Activated CD4-positive, alpha-beta T cell treated with anti-CD3 and anti-CD28 coated beads for 36 hours (primary cell): ENCODE measurements at regions of chr11 and their contacts with region 1.

Region 1: GRCh38 chr11:102341844-102342318 is 5.1 kb upstream of the BIRC2 start:
- DNase-seq: peak; percentile 84
- ATAC-seq: peak; percentile 43
- H3K4me3 Mint-ChIP-seq: no peak overlapping the region
- H3K27ac Mint-ChIP-seq: no peak overlapping the region
- H3K4me1 Mint-ChIP-seq: peaks cover 45% of the 10 kb centered on the region
- H3K27me3 Mint-ChIP-seq: no peaks in the 10 kb centered on the region

Region 2: GRCh38 chr11:100908746-100909145 is 1433.1 kb before region 1 on chr11:
- CTCF ChIA-PET with region 1: no interaction called
- POLR2A ChIA-PET with region 1: no interaction called
- intact Hi-C with region 1: no loop called
- DNase-seq: no peak
- ATAC-seq: no peak
- H3K4me3 Mint-ChIP-seq: no peak overlapping the region
- H3K27ac Mint-ChIP-seq: no peak overlapping the region
- H3K4me1 Mint-ChIP-seq: no peaks in the 10 kb centered on the region
- H3K27me3 Mint-ChIP-seq: no peaks in the 10 kb centered on the region

Region 3: DNA sequence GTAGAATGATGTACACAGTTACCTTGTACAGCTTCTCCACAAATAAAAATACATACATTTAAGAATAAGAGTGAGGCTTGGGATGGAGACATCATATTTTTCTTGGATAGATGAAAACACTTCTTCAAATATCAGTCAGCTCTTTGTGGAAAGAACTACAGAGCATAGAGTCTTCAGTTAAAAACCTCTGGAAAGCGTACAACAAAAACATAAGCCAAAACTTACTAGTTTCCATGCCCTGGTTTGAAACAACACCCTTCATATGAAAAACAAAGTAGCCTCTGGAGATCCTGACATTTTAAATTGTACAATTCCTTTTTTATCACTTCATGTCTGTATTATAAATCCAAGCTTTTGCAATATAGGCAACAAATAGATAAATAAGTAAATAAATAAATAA is 434.1 kb before region 1 on chr11:
- CTCF ChIA-PET with region 1: no interaction called
- POLR2A ChIA-PET with region 1: no interaction called
- intact Hi-C with region 1: no loop called
- DNase-seq: no peak
- ATAC-seq: no peak
- H3K4me3 Mint-ChIP-seq: no peak overlapping the region
- H3K27ac Mint-ChIP-seq: no peak overlapping the region
- H3K4me1 Mint-ChIP-seq: no peaks in the 10 kb centered on the region
- H3K27me3 Mint-ChIP-seq: peaks cover 16% of the 10 kb centered on the region

Region 4: DNA sequence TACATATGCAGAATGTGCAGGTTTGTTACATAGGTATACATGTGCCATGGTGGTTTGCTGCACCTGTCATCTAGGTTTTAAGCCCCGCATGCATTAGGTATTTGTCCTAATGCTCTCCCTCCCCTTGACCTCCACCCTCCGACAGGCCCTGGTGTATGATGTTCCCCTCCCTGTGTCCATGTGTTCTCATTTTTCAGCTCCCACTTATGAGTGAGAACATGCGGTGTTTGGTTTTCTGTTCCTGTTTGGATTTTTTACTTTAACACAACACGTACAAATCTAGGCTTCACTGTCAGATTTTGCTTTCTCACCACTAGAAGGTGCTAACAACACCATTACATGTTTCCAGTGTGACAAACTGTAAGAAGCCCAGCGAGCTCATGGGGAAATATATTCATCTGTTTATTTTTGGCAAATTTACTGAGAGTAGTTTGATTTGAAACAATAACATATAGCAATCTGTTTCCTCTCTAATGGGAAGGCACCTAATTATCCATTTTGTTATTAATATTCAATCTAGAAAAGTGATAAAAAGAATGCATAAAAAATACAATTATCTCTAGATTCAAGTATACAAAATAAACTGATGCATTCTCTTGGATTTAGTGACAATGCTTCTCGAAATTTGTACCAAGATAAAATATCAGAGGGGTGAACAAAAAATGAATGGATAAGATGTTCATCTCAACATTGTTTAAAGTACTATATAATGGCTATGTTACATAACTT is 47.8 kb before region 1 on chr11:
- CTCF ChIA-PET with region 1: interaction called, 67 read pairs
- POLR2A ChIA-PET with region 1: no interaction called
- intact Hi-C with region 1: no loop called
- DNase-seq: no peak
- ATAC-seq: peak; percentile 95
- H3K4me3 Mint-ChIP-seq: peak overlapping the region; percentile 68
- H3K27ac Mint-ChIP-seq: peak overlapping the region; percentile 95
- H3K4me1 Mint-ChIP-seq: peaks cover 27% of the 10 kb centered on the region
- H3K27me3 Mint-ChIP-seq: no peaks in the 10 kb centered on the region

Region 5: GRCh38 chr11:102361086-102362031 is 19.5 kb after region 1 on chr11:
- CTCF ChIA-PET with region 1: interaction called, 25 read pairs
- POLR2A ChIA-PET with region 1: no interaction called
- intact Hi-C with region 1: no loop called
- DNase-seq: peak; percentile 33
- ATAC-seq: peak; percentile 86
- H3K4me3 Mint-ChIP-seq: no peak overlapping the region
- H3K27ac Mint-ChIP-seq: peak overlapping the region; percentile 75
- H3K4me1 Mint-ChIP-seq: peaks cover 42% of the 10 kb centered on the region
- H3K27me3 Mint-ChIP-seq: no peaks in the 10 kb centered on the region

Region 6: GRCh38 chr11:102430158-102430836 is 88.4 kb after region 1 on chr11:
- CTCF ChIA-PET with region 1: interaction called, 13 read pairs
- POLR2A ChIA-PET with region 1: interaction called, 5 read pairs
- intact Hi-C with region 1: no loop called
- DNase-seq: peak; percentile 71
- ATAC-seq: peak; percentile 89
- H3K4me3 Mint-ChIP-seq: peak overlapping the region; percentile 23
- H3K27ac Mint-ChIP-seq: peak overlapping the region; percentile 96
- H3K4me1 Mint-ChIP-seq: peaks cover 79% of the 10 kb centered on the region
- H3K27me3 Mint-ChIP-seq: no peaks in the 10 kb centered on the region

Region 7: GRCh38 chr11:102513869-102514268 is 172.0 kb after region 1 on chr11:
- CTCF ChIA-PET with region 1: interaction called, 15 read pairs
- POLR2A ChIA-PET with region 1: no interaction called
- intact Hi-C with region 1: loop called in 1 of 2 experiments (anchors 1 kb)
- DNase-seq: no peak
- ATAC-seq: no peak
- H3K4me3 Mint-ChIP-seq: no peak overlapping the region
- H3K27ac Mint-ChIP-seq: no peak overlapping the region
- H3K4me1 Mint-ChIP-seq: no peaks in the 10 kb centered on the region
- H3K27me3 Mint-ChIP-seq: peaks cover 2% of the 10 kb centered on the region

Region 8: DNA sequence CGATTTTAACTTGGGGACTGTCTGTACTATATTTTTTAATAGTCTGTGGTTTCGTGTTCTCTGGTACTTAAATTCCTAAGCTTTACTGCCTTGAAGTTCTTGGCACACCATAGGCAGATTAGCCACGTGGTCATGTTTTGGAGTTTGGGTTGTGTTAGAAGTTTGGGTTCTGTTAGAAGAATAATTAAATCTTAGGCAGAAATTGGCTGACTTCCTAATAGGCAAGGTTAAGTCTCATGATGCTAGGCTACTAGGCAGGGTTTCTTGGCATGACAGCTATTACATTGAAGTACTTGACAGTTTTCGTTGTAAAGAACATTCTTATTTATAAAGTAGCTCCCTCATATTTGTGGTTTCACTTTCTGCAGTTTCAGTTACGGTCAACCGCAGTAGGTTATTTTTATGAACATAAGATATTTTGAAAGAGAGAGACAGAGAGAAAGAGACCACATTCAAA is 218.7 kb after region 1 on chr11:
- CTCF ChIA-PET with region 1: no interaction called
- POLR2A ChIA-PET with region 1: no interaction called
- intact Hi-C with region 1: no loop called
- DNase-seq: no peak
- ATAC-seq: peak; percentile 55
- H3K4me3 Mint-ChIP-seq: peak overlapping the region; percentile 38
- H3K27ac Mint-ChIP-seq: peak overlapping the region; percentile 24
- H3K4me1 Mint-ChIP-seq: peaks cover 40% of the 10 kb centered on the region
- H3K27me3 Mint-ChIP-seq: peaks cover 2% of the 10 kb centered on the region